ENCODE measurements at regions of chr16 and their contacts with region 1.

Region 1: GRCh38 chr16:83878838-83879237 is 20.1 kb upstream of the MLYCD start:
- DNase-seq: peak; percentile 60
- ATAC-seq: peak; percentile 67
- H3K4me3 ChIP-seq: no peak overlapping the region
- H3K27ac ChIP-seq: no peak overlapping the region
- H3K4me1 ChIP-seq: no peaks in the 10 kb centered on the region
- H3K27me3 ChIP-seq: peaks cover 35% of the 10 kb centered on the region
- CTCF ChIP-seq: peak; percentile 88
- POLR2A ChIP-seq: 0 out of 2 replicates have a peak, but pooled peaks have one; percentile 33
- RAD21 ChIP-seq: peak; percentile 90

Region 2: DNA sequence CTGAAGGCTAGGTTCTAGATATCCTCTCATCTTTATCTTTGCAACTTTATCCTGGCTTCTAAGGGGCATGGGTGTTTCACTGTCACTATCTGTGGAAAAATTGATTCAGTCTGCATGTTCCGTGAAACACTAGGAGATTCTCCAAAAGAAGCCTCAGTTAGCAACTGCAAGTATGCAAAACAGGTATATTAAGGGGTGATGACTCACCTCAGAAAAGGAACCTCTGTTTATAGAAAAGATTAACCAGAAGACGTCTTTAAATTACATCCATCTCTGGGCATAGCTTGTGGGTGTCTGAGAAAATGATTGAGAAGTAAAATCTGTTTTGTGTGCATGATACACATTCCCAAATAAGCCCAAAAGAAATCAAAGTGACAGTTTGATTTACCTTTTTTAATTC is 424.9 kb before region 1 on chr16:
- CTCF ChIA-PET with region 1: no interaction called
- POLR2A ChIA-PET with region 1: no interaction called
- dilution Hi-C with region 1: no loop called
- in situ Hi-C with region 1: no loop called
- intact Hi-C with region 1: loop called (anchors 5 kb)
- DNase-seq: peak; percentile 10
- ATAC-seq: no peak
- H3K4me3 ChIP-seq: no peak overlapping the region
- H3K27ac ChIP-seq: no peak overlapping the region
- H3K4me1 ChIP-seq: no peaks in the 10 kb centered on the region
- H3K27me3 ChIP-seq: no peaks in the 10 kb centered on the region
- CTCF ChIP-seq: no peak
- POLR2A ChIP-seq: no peak
- RAD21 ChIP-seq: no peak

Region 3: GRCh38 chr16:83689385-83689831 is 189.4 kb before region 1 on chr16:
- CTCF ChIA-PET with region 1: no interaction called
- POLR2A ChIA-PET with region 1: no interaction called
- dilution Hi-C with region 1: no loop called
- in situ Hi-C with region 1: no loop called
- intact Hi-C with region 1: no loop called
- DNase-seq: peak; percentile 94
- ATAC-seq: peak; percentile 88
- H3K4me3 ChIP-seq: no peak overlapping the region
- H3K27ac ChIP-seq: no peak overlapping the region
- H3K4me1 ChIP-seq: peaks cover 2% of the 10 kb centered on the region; the same call in 1 of the 2 replicates
- H3K27me3 ChIP-seq: peaks cover 27% of the 10 kb centered on the region
- CTCF ChIP-seq: no peak
- POLR2A ChIP-seq: no peak
- RAD21 ChIP-seq: no peak

Region 4: GRCh38 chr16:83826146-83826913 is 52.5 kb before region 1 on chr16:
- CTCF ChIA-PET with region 1: interaction called, 5 read pairs
- POLR2A ChIA-PET with region 1: no interaction called
- dilution Hi-C with region 1: no loop called
- in situ Hi-C with region 1: loop called (anchors 5 kb)
- intact Hi-C with region 1: loop called (anchors 1 kb)
- DNase-seq: peak; percentile 78
- ATAC-seq: peak; percentile 95
- H3K4me3 ChIP-seq: no peak overlapping the region
- H3K27ac ChIP-seq: no peak overlapping the region
- H3K4me1 ChIP-seq: peaks cover 4% of the 10 kb centered on the region
- H3K27me3 ChIP-seq: peaks cover 5% of the 10 kb centered on the region
- CTCF ChIP-seq: peak; percentile 91
- POLR2A ChIP-seq: no peak
- RAD21 ChIP-seq: peak; percentile 93